ENCODE measurements at regions of chr11 and their contacts with region 1.

Region 1: GRCh38 chr11:33742249-33742851 is 6.1 kb upstream of the CD59 start:
- DNase-seq: peak; percentile 43 to 61 (median 56)
- H3K4me3 ChIP-seq: no peak overlapping the region
- H3K27ac ChIP-seq: no peak overlapping the region
- H3K4me1 ChIP-seq: peaks cover 0 to 3% (median under 1%) of the 10 kb centered on the region in 4 experiments
- H3K27me3 ChIP-seq: no peaks in the 10 kb centered on the region

Region 2: DNA sequence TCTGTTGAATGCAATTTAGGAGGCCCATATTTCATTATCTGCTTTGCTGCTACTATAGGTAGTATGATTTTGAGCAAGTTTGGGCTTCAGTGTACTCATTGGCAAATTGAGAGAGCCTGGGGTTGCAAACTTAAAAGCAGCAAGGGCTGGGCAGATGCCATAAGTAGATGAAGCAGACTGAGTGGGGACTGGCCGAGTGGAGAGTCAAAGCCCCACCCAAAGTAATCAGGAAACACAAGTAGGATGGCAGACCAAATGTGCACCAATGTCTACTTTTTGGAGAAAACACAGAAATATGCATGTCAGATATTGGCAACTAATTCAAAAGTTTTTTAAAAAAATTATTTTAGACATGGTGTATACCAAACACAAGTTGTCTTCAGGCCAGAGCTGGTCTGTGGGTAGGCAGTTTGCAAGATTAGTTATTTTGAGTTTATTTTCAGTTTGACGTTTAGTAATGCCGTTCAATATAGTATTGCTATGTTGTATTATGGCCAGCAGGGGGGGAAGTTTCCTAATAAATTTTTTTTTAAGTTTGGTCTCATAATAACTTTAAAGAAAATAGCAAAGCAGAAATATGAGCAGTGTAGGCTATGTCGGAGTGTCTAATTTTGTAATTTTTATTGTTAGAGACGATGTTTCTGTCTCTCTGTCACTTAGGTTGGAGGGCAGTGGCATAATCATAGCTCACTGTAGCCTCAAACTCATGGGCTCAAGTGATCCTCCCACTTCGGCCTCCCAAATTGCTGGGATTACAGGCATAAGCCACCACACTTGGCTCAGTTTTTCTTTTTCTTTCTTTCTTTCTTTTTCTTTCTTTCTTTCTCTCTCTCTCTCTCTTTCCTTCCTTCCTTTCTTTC is 380.1 kb before region 1 on chr11:
- CTCF ChIA-PET with region 1: interaction called, 12 read pairs
- POLR2A ChIA-PET with region 1: no interaction called
- DNase-seq: peak; percentile 54 to 81 (median 74)
- H3K4me3 ChIP-seq: peak overlapping the region in 1 of 7 experiments; percentile 15
- H3K27ac ChIP-seq: no peak overlapping the region
- H3K4me1 ChIP-seq: peaks cover 0 to 2% (median 0%) of the 10 kb centered on the region in 4 experiments
- H3K27me3 ChIP-seq: peaks cover 0 to 4% (median 0%) of the 10 kb centered on the region in 5 experiments

Region 3: GRCh38 chr11:33542921-33543320 is 199.4 kb before region 1 on chr11:
- CTCF ChIA-PET with region 1: interaction called, 21 read pairs
- POLR2A ChIA-PET with region 1: no interaction called
- DNase-seq: peak; percentile 31 to 64 (median 48)
- H3K4me3 ChIP-seq: no peak overlapping the region
- H3K27ac ChIP-seq: no peak overlapping the region
- H3K4me1 ChIP-seq: no peaks in the 10 kb centered on the region
- H3K27me3 ChIP-seq: peaks cover 0 to 9% (median 3%) of the 10 kb centered on the region in 5 experiments

Region 4: DNA sequence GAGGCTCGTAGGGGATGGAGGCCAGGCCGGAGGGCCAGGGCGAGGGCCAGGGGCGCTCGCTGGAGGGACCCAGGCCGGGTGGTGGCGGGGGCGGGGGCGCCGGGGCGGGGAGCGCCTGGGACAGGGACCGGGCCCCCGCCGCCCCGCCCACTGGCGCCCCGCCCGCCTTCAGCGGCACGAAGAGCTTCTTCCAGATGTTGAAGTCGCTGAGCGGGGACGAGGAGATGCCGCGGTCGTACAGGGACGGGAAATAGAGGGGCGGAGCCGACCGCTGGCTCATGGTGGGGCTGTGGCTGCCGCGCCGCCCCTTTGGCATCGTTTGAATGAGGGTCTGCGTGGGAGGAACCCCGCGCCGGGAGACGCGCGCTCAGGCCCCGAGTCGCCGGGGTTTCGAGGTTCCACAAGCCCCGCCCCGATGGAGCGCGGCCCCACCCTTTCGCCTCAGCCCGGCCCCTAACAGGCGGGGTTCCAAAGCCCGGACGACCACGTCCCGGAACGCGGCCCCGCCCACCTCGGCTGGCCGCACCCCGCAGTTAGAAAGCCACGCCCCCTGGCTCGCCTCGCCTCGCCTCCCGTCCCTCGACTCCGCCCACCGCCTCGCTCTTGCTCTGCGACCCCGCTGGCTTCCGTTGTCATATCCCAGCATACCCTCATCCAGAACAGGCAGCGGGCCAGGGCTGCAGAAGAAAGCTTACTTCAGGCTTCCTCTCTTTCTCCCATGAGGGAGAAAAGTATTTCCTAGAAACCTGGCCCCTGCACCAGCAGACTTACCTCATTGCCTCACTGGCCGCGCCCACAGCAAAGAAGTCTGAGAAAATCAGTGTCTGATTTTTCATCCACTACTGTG is 41.7 kb before region 1 on chr11 and contains the start of gene C11orf91:
- CTCF ChIA-PET with region 1: interaction called, 13 read pairs
- POLR2A ChIA-PET with region 1: interaction called, 4 read pairs
- DNase-seq: peak; percentile 89 to 94 (median 93)
- H3K4me3 ChIP-seq: peak within 1 kb of the TSS; percentile 52 to 80 (median 71)
- H3K27ac ChIP-seq: no peak within 1 kb of the TSS
- H3K4me1 ChIP-seq: peaks cover 10 to 29% (median 23%) of the 10 kb centered on the region in 4 experiments
- H3K27me3 ChIP-seq: peaks cover 0 to 5% (median 3%) of the 10 kb centered on the region in 5 experiments

Region 5: DNA sequence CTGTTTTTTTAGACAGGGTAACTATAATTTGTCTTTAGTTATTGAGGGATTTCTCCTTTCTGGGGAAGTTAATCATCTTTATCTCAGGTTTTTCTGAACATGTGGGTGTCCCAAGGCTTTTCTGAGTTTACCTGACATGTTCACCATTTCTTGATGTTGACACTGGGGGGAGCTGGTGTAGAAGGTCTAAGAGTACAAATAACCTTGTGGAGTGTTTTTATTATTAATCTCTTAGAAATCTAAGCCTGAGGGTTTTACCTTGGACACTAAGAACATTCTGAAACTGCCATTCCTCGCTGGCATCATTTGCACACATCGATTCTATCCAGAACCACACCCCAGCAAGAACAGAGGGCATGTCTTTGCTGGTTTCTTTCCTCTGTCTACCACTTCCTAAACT is 26.1 kb before region 1 on chr11:
- CTCF ChIA-PET with region 1: interaction called, 151 read pairs
- POLR2A ChIA-PET with region 1: interaction called, 9 read pairs
- DNase-seq: peak; percentile 44 to 68 (median 67)
- H3K4me3 ChIP-seq: no peak overlapping the region
- H3K27ac ChIP-seq: no peak overlapping the region
- H3K4me1 ChIP-seq: peaks cover 5 to 12% (median 7%) of the 10 kb centered on the region in 4 experiments
- H3K27me3 ChIP-seq: no peaks in the 10 kb centered on the region

Region 6: GRCh38 chr11:33722579-33723225 is 19.6 kb before region 1 on chr11:
- CTCF ChIA-PET with region 1: interaction called, 151 read pairs
- POLR2A ChIA-PET with region 1: no interaction called
- DNase-seq: no peak
- H3K4me3 ChIP-seq: no peak overlapping the region
- H3K27ac ChIP-seq: peak overlapping the region in 1 of 2 experiments; percentile 28
- H3K4me1 ChIP-seq: peaks cover 5 to 48% (median 31%) of the 10 kb centered on the region in 4 experiments
- H3K27me3 ChIP-seq: no peaks in the 10 kb centered on the region

Region 7: DNA sequence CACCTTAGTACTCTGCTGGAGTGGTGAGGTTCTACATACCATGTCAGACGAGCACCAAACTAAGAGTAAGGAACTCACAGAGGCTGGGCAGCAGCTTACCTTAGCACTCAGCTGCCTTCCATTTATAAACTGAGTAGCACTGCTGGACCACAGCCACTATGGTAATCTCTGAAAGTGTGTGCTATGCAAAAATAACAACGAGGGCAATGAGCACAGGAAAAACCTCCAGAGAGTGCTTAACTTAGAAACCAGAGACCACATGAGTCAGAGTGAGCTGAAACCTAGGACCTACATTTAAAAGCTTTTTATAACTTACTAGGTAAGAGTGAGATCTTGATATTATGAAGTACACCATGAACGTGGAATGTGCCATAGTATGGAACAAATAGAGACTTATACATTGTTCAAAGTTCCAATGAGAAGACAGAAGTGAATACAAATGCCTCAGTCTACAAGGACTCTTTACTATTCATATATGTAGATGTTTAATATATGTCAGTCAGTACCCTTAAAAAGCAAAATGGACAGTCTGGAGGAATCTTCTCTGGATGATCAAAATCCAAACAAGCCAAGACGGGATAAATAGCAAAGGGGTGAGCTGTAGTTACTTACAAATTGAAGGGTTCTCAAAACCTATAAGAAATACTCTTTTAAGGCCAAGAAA is 11.1 kb after region 1 on chr11:
- CTCF ChIA-PET with region 1: interaction called, 27 read pairs
- POLR2A ChIA-PET with region 1: no interaction called
- DNase-seq: no peak
- H3K4me3 ChIP-seq: no peak overlapping the region
- H3K27ac ChIP-seq: no peak overlapping the region
- H3K4me1 ChIP-seq: no peaks in the 10 kb centered on the region
- H3K27me3 ChIP-seq: no peaks in the 10 kb centered on the region

Region 8: DNA sequence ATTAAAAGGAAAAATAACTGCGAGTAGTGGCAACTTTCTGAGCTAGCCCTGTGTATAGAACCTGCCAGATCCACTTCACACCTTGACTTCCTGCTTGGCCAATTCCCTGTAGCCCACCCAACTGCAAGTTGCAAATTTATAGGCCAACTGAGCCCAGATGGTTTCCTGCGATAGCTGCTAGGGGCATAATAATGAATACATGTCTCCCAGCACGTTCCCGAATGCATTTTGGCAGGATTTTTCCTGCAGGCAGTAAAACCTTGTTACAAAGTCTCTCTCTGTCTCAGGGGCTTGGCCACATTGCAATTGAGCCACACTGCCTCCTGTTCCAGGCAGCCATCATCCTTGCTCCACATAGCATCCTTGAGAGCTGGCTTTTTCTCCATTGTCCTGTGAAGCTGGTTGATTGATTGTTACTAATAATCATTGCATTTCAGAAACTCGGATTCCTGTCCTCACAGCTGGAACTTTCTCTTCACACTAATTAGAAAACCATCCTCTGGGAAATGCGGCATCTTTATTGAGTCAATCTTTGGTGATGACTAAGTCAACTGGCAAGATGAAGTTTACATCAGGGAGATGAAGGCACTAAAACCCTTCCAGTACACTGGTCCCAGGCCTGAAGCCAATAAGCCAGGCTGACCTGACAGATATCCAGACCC is 168.1 kb after region 1 on chr11:
- CTCF ChIA-PET with region 1: no interaction called
- POLR2A ChIA-PET with region 1: no interaction called
- DNase-seq: no peak
- H3K4me3 ChIP-seq: no peak overlapping the region
- H3K27ac ChIP-seq: no peak overlapping the region
- H3K4me1 ChIP-seq: peaks cover 25 to 63% (median 42%) of the 10 kb centered on the region in 4 experiments
- H3K27me3 ChIP-seq: no peaks in the 10 kb centered on the region